Caco-2 (cell line): ENCODE measurements at regions of chrX and their contacts with region 1.

Region 1: GRCh38 chrX:152821145-152821765 is 9.3 kb downstream of the CETN2 start:
- DNase-seq: peak; percentile 34 to 56
- H3K4me3 ChIP-seq: no peak overlapping the region
- H3K4me3 Mint-ChIP-seq: no peak overlapping the region
- H3K27ac Mint-ChIP-seq: no peak overlapping the region
- H3K4me1 ChIP-seq: no peaks in the 10 kb centered on the region
- H3K4me1 Mint-ChIP-seq: no peaks in the 10 kb centered on the region
- H3K27me3 ChIP-seq: 0 out of 2 replicates have a peak, but pooled peaks cover 1% of the 10 kb centered on the region
- H3K27me3 Mint-ChIP-seq: peaks cover 7% of the 10 kb centered on the region
- CTCF ChIP-seq: peak; percentile 44 to 64

Region 2: GRCh38 chrX:151753313-151754041 is 1067.8 kb before region 1 on chrX:
- CTCF ChIA-PET with region 1: no interaction called
- POLR2A ChIA-PET with region 1: no interaction called
- intact Hi-C with region 1: loop called (anchors 1 kb)
- DNase-seq: peak; percentile 36 to 56
- H3K4me3 ChIP-seq: no peak overlapping the region
- H3K4me3 Mint-ChIP-seq: no peak overlapping the region
- H3K27ac Mint-ChIP-seq: no peak overlapping the region
- H3K4me1 ChIP-seq: no peaks in the 10 kb centered on the region
- H3K4me1 Mint-ChIP-seq: no peaks in the 10 kb centered on the region
- H3K27me3 ChIP-seq: no peaks in the 10 kb centered on the region
- H3K27me3 Mint-ChIP-seq: peaks cover 19% of the 10 kb centered on the region
- CTCF ChIP-seq: peak; percentile 47 to 79

Region 3: GRCh38 chrX:152641996-152642395 is 179.3 kb before region 1 on chrX:
- CTCF ChIA-PET with region 1: interaction called, 3 read pairs
- POLR2A ChIA-PET with region 1: no interaction called
- intact Hi-C with region 1: loop called (anchors 1 kb)
- DNase-seq: peak in 1 of 2 experiments; percentile 2
- H3K4me3 ChIP-seq: no peak overlapping the region
- H3K4me3 Mint-ChIP-seq: no peak overlapping the region
- H3K27ac Mint-ChIP-seq: no peak overlapping the region
- H3K4me1 ChIP-seq: no peaks in the 10 kb centered on the region
- H3K4me1 Mint-ChIP-seq: no peaks in the 10 kb centered on the region
- H3K27me3 ChIP-seq: no peaks in the 10 kb centered on the region
- H3K27me3 Mint-ChIP-seq: no peaks in the 10 kb centered on the region
- CTCF ChIP-seq: no peak